ENCODE measurements at regions of chr15 and their contacts with region 1.

Region 1: GRCh38 chr15:83538682-83539081 is 91.5 kb downstream of the SH3GL3 start:
- DNase-seq: no peak
- H3K4me3 ChIP-seq: no peak overlapping the region
- H3K27ac ChIP-seq: no peak overlapping the region
- H3K4me1 ChIP-seq: no peaks in the 10 kb centered on the region
- H3K27me3 ChIP-seq: no peaks in the 10 kb centered on the region
- CTCF ChIP-seq: no peak

Region 2: DNA sequence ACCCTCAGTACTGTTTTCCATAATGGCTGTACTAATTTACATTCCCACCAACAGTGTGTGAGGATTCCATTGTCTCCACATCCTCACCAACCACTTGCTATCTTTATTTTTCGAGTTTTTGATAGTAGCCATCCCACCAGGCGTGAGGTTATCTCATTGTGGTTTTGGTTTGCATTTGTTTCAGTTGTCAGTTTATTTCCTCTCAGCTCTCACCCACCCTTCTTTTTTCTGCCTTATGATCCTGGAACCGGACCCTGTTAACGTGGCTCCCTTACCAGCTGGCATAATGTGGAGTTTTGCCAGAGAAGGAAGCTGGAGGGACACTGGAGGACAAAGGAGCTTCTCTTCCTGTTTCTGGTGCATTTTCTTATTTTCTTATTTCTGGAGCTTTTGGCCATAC is 116.6 kb before region 1 on chr15:
- intact Hi-C with region 1: loop called (anchors 10 kb)
- DNase-seq: no peak
- H3K4me3 ChIP-seq: no peak overlapping the region
- H3K27ac ChIP-seq: no peak overlapping the region
- H3K4me1 ChIP-seq: no peaks in the 10 kb centered on the region
- H3K27me3 ChIP-seq: peaks cover 0 to 9% of the 10 kb centered on the region in 2 donors
- CTCF ChIP-seq: no peak

Region 3: GRCh38 chr15:83462953-83463433 is 75.7 kb before region 1 on chr15:
- intact Hi-C with region 1: no loop called
- DNase-seq: no peak
- H3K4me3 ChIP-seq: no peak overlapping the region
- H3K27ac ChIP-seq: no peak overlapping the region
- H3K4me1 ChIP-seq: no peaks in the 10 kb centered on the region
- H3K27me3 ChIP-seq: peaks cover 0 to 4% of the 10 kb centered on the region in 2 donors
- CTCF ChIP-seq: no peak

Region 4: DNA sequence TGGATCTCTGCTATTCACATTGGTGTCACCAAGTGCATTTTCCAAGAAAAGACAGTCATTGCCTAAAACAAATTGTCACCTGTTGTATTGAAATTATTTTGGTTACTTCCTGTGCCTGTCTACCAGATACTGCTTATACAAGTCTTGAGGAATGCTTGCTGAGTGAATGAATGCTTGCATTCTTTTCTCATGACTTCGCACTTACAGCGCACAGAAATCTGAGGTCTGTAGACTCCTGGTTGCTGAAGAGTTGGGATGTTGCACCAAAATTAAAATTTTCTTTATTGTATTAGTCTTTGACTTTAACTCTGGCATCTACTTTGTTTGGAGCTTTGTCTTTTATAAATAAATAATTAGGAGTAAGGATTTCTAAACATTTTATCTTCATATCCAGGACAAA is 63.1 kb before region 1 on chr15:
- intact Hi-C with region 1: loop called (anchors 10 kb)
- DNase-seq: no peak
- H3K4me3 ChIP-seq: no peak overlapping the region
- H3K27ac ChIP-seq: no peak overlapping the region
- H3K4me1 ChIP-seq: peaks cover 0 to 19% (median 2%) of the 10 kb centered on the region in 4 donors
- H3K27me3 ChIP-seq: peaks cover 0 to 7% of the 10 kb centered on the region in 2 donors
- CTCF ChIP-seq: no peak

Region 5: GRCh38 chr15:83571820-83572707 is 33.4 kb after region 1 on chr15:
- intact Hi-C with region 1: no loop called
- DNase-seq: no peak
- H3K4me3 ChIP-seq: no peak overlapping the region
- H3K27ac ChIP-seq: no peak overlapping the region
- H3K4me1 ChIP-seq: no peaks in the 10 kb centered on the region
- H3K27me3 ChIP-seq: no peaks in the 10 kb centered on the region
- CTCF ChIP-seq: peak; percentile 44 to 69

Measured in tibial artery (tissue), 4 donors.